Mammary epithelial cell (primary cell): ENCODE measurements at regions of chr20 and their contacts with region 1.

Region 1: DNA sequence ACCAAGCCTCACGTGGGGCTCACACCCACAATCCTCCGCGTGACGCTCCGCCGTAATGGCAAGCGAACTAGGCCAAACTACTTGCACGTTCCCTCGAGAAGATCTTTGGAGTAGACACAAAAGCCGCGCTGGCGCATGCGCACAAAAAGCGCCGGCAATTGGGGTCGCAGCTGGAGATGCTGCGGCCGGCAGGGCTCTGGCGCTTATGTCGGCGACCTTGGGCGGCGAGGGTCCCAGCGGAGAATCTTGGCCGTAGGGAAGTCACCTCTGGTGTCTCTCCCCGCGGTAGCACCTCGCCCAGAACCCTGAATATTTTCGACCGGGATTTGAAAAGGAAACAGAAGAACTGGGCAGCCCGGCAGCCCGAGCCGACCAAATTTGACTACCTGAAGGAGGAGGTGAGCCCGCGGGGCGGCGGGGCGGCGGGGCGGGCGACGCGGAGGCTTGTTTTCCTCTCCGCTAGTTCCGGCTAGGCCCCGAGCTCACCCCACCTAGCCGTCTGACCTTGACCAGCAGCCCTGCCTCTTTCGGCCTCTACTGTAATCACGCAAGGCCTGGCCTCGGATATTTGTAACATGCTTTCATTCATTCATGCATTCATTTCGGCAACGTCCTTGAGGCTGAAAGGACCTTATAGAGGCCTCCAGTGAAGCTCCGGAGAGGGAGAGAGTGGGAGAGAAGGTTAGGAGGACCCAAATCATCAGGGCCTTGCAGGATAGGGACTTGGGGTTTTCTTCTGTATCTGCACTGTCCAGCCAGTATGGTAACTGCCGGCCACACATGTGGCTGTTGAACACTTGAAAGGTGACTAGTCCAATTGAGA is at the starts of genes ESF1 and NDUFAF5:
- DNase-seq: peak; percentile 97
- H3K4me3 ChIP-seq: peak within 1 kb of the TSS; percentile 86 to 95 (median 87)
- H3K27ac ChIP-seq: peak within 1 kb of the TSS; percentile 74
- H3K4me1 ChIP-seq: peaks cover 18% of the 10 kb centered on the region
- H3K27me3 ChIP-seq: no peaks in the 10 kb centered on the region
- CTCF ChIP-seq: no peak
- total RNA-seq, gene ESF1: 6.7 to 16.2 TPM
- total RNA-seq, gene NDUFAF5: 10.8 to 34.7 TPM

Region 2: GRCh38 chr20:13638496-13639222 is 146.4 kb before region 1 on chr20 and contains the start of gene TASP1:
- CTCF ChIA-PET with region 1: no interaction called
- dilution Hi-C with region 1: no loop called
- in situ Hi-C with region 1: no loop called
- intact Hi-C with region 1: loop called (anchors 10 kb)
- DNase-seq: peak; percentile 98
- H3K4me3 ChIP-seq: peak within 1 kb of the TSS; percentile 81 to 95 (median 90)
- H3K27ac ChIP-seq: peak within 1 kb of the TSS; percentile 92
- H3K4me1 ChIP-seq: no peaks in the 10 kb centered on the region
- H3K27me3 ChIP-seq: no peaks in the 10 kb centered on the region
- CTCF ChIP-seq: no peak
- total RNA-seq, gene TASP1: 17.8 to 23.4 TPM